Activated B cell treated with CpG ODN at 0.5 μM for 24 hours (primary cell): ENCODE measurements at regions of chr16 and their contacts with region 1.

Region 1: DNA sequence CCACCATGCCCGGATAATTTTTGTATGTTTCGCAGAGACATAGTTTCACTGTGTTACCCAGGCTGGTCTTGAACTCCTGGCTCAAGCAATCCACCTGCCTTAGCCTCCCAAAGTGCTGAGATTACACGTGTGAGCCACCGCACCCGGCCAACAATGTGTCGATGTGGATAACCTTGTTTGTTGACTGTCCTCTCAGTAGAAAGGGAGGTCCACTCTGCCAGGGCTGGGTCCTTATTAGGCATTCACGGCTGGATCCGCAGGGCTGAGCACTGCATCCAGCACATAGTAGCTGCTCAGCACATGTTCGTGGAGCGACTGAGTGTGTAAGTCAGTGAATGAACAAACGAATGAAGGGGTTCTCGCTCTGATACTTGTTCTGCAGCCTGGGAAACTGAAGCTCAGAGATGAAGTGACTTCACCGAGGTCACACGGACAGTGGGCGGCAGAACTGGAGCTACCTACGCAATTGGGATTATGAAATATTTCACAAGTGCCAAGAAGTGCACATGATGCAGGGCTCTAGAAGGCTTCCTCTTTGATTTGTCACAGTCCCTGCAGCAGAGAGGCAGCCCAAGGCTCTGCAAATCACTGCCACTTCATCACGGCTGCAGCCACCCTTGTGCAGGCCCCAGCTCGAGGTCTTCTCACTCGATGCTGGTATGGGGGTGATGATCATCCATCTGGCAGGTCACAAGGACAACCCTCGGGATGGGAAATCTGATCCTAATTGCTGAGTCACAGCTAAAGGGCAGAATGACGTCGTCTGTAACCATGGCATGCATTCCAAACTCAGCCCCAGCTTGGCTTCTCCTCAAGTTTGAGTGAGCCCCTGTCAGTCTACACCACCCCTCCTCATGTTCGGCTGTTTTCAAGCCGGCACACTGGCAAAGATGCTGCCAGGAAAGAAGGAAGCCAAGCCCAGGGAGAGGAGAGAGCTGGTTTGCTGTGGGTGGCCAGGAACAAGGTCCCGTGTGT is 28.0 kb upstream of the SNN start:
- DNase-seq: no peak
- ATAC-seq: no peak
- H3K4me3 Mint-ChIP-seq: no peak overlapping the region
- H3K27ac Mint-ChIP-seq: no peak overlapping the region
- H3K4me1 Mint-ChIP-seq: peaks cover 8% of the 10 kb centered on the region
- H3K27me3 Mint-ChIP-seq: no peaks in the 10 kb centered on the region
- CTCF ChIP-seq: no peak

Region 2: DNA sequence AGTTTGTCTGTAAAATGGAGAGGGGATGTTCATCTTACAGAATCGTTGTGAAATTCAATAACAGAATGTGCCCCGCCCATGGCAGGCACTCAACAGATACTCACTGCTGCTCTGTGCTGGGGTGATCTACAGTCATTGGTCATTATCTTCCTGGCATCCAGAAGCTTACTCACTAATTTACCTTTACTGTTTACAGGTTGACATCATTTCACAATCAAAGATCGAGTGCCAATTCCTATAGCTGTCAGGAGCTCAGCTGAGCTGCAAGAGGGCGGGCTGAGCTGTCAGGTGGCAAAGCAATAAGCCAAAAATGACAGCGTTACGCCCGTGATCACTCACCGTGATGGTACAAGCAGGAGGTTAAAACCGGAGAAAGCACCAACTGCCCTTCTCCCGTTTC is 104.7 kb before region 1 on chr16:
- CTCF ChIA-PET with region 1: interaction called, 41 read pairs
- POLR2A ChIA-PET with region 1: interaction called, 7 read pairs
- intact Hi-C with region 1: loop called (anchors 1 kb)
- DNase-seq: no peak
- ATAC-seq: no peak
- H3K4me3 Mint-ChIP-seq: no peak overlapping the region
- H3K27ac Mint-ChIP-seq: no peak overlapping the region
- H3K4me1 Mint-ChIP-seq: no peaks in the 10 kb centered on the region
- H3K27me3 Mint-ChIP-seq: no peaks in the 10 kb centered on the region
- CTCF ChIP-seq: no peak

Region 3: GRCh38 chr16:11576427-11577289 is 63.6 kb before region 1 on chr16:
- CTCF ChIA-PET with region 1: no interaction called
- POLR2A ChIA-PET with region 1: no interaction called
- intact Hi-C with region 1: loop called (anchors 2 kb)
- DNase-seq: no peak
- ATAC-seq: peak; percentile 78
- H3K4me3 Mint-ChIP-seq: peak overlapping the region; percentile 52
- H3K27ac Mint-ChIP-seq: peak overlapping the region; percentile 62
- H3K4me1 Mint-ChIP-seq: peaks cover 90% of the 10 kb centered on the region
- H3K27me3 Mint-ChIP-seq: no peaks in the 10 kb centered on the region
- CTCF ChIP-seq: no peak